Esophagus squamous epithelium (tissue), 5 donors: ENCODE measurements at regions of chr2 and their contacts with region 1.

Region 1: GRCh38 chr2:187453078-187453641 is 5.1 kb upstream of the CALCRL start:
- DNase-seq: no peak
- H3K4me3 ChIP-seq: no peak overlapping the region
- H3K27ac ChIP-seq: no peak overlapping the region
- H3K4me1 ChIP-seq: no peaks in the 10 kb centered on the region
- H3K27me3 ChIP-seq: no peaks in the 10 kb centered on the region
- CTCF ChIP-seq: peak in 4 of 6 experiments; percentile 31 to 54 (median 40)
- POLR2A ChIP-seq: no peak

Region 2: DNA sequence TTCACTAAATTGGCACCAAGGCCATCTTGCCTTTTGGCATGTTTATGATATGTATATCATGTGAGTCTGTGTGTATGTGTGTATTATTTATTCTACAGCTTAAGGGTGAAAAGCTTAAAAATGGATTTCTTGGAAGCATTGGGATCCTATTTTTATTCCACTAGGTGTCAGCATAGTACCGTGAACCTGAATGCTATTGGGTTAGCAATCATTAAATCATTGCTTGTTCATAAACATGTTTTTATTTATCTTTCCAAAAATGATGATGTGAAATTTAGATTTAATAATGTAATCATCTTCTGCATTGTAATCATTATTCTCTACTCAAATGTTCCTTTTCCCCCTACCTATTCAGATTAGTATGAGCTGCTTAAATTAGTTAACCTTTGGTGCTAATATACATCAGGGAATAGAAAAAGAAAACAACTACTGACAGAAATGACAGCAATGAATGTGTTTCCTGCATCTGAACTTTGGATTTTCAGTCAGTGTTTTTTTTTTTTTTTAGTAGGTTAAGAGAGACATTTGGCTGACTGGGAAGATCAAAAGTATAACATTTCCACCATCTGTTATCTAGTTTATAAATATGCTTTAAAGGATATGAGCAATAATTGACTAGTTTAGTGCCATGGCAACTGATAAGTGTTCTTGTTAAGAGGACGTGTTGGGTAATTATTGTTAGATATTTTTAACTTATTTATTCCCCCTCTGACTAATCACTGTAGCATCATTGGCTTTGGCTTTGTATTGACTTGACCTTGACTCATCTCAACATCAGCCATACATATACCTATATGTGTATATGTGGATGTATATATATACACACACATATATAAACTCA is 590.1 kb before region 1 on chr2:
- intact Hi-C with region 1: loop called (anchors 10 kb)
- DNase-seq: no peak
- H3K4me3 ChIP-seq: no peak overlapping the region
- H3K27ac ChIP-seq: no peak overlapping the region
- H3K4me1 ChIP-seq: no peaks in the 10 kb centered on the region
- H3K27me3 ChIP-seq: peaks cover 0 to 2% (median 0%) of the 10 kb centered on the region in 4 donors
- CTCF ChIP-seq: peak in 5 of 6 experiments; percentile 54 to 75 (median 61)
- POLR2A ChIP-seq: no peak

Region 3: GRCh38 chr2:187299122-187299906 is 153.8 kb before region 1 on chr2:
- intact Hi-C with region 1: loop called (anchors 10 kb)
- DNase-seq: no peak
- H3K4me3 ChIP-seq: no peak overlapping the region
- H3K27ac ChIP-seq: no peak overlapping the region
- H3K4me1 ChIP-seq: peaks cover 0 to 4% (median 0%) of the 10 kb centered on the region in 3 donors
- H3K27me3 ChIP-seq: no peaks in the 10 kb centered on the region
- CTCF ChIP-seq: peak in 3 of 6 experiments; percentile 20 to 50 (median 26)
- POLR2A ChIP-seq: no peak

Region 4: DNA sequence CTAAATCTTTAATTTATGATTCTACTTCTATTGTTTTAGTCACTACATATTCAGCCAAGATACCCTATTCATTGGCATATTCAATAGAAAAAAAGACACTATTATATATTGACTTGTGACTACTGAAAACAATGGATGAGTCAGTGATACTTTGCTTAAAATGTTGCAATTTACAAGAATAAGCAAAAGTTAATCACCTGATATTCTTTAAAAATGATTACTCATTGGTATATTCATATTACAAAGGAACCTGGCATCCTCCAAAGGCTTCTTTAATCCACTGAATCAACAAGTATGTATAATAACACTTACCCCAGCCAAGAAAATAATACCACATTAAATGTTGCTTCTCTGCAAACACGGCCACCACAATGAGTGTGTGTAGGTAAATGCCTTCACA is 92.9 kb before region 1 on chr2:
- intact Hi-C with region 1: no loop called
- DNase-seq: no peak
- H3K4me3 ChIP-seq: no peak overlapping the region
- H3K27ac ChIP-seq: no peak overlapping the region
- H3K4me1 ChIP-seq: peaks cover 0 to 15% (median 5%) of the 10 kb centered on the region in 3 donors
- H3K27me3 ChIP-seq: no peaks in the 10 kb centered on the region
- CTCF ChIP-seq: no peak
- POLR2A ChIP-seq: no peak

Region 5: GRCh38 chr2:187475499-187476248 is 22.5 kb after region 1 on chr2:
- intact Hi-C with region 1: no loop called
- DNase-seq: no peak
- H3K4me3 ChIP-seq: no peak overlapping the region
- H3K27ac ChIP-seq: no peak overlapping the region
- H3K4me1 ChIP-seq: peaks cover 0 to 12% (median 0%) of the 10 kb centered on the region in 3 donors
- H3K27me3 ChIP-seq: no peaks in the 10 kb centered on the region
- CTCF ChIP-seq: no peak
- POLR2A ChIP-seq: no peak

Region 6: GRCh38 chr2:187964746-187965145 is 511.6 kb after region 1 on chr2:
- intact Hi-C with region 1: no loop called
- DNase-seq: no peak
- H3K4me3 ChIP-seq: no peak overlapping the region
- H3K27ac ChIP-seq: no peak overlapping the region
- H3K4me1 ChIP-seq: no peaks in the 10 kb centered on the region
- H3K27me3 ChIP-seq: no peaks in the 10 kb centered on the region
- CTCF ChIP-seq: no peak
- POLR2A ChIP-seq: no peak